Upper lobe of right lung (tissue), 1 donor: ENCODE measurements at regions of chrX and their contacts with region 1.

Region 1: DNA sequence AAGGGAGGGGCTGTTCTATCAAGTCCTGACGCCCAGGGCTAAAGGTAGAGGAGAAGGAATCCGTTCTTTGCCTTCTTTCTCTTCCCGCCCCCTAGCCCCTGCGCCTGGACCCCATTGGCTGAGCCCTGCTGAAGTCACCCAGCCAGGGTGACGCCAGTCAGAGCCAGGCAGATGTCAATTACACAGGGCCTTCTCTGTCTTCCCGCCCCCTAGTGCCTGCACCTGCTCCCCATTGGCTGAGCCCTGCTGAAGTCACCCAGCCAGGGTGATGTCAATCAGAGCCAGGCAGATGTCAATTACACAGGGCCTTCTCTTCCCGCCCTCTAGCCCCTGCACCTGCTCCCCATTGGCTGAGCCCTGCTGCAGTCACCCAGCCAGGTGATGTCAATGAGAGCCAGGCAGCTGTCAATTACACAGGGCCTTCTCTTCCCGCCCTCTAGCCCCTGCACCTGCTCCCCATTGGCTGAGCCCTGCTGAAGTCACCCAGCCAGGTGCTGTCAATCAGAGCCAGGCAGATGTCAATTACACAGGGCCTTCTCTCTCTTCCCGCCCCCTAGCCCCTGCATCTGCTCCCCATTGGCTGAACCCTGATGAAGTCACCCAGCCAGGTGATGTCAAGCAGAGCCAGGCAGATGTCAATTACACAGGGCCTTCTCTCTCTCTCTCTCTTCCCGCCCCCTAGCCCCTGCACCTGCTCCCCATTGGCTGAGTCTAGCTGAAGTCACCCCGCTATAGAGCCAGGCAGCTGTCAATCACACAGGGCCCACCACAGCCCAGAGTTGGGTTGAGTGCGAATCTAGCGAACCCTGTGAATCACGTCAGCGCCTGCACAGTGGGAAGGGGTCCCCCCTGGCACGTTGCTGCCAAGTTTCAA is 46.4 kb downstream of the ASMT start:
- DNase-seq: peak; percentile 79
- ATAC-seq: peak; percentile 93
- H3K4me3 ChIP-seq: peak overlapping the region; percentile 32
- H3K27ac ChIP-seq: peak overlapping the region; percentile 31
- H3K4me1 ChIP-seq: no peaks in the 10 kb centered on the region
- H3K27me3 ChIP-seq: no peaks in the 10 kb centered on the region
- CTCF ChIP-seq: no peak

Region 2: GRCh38 chrX:2595258-2595657 is 934.0 kb after region 1 on chrX:
- intact Hi-C with region 1: loop called (anchors 10 kb)
- DNase-seq: no peak
- ATAC-seq: no peak
- H3K4me3 ChIP-seq: no peak overlapping the region
- H3K27ac ChIP-seq: no peak overlapping the region
- H3K4me1 ChIP-seq: no peaks in the 10 kb centered on the region
- H3K27me3 ChIP-seq: no peaks in the 10 kb centered on the region
- CTCF ChIP-seq: no peak